Tibial artery (tissue), 4 donors: ENCODE measurements at regions of chr17 and their contacts with region 1.

Region 1: DNA sequence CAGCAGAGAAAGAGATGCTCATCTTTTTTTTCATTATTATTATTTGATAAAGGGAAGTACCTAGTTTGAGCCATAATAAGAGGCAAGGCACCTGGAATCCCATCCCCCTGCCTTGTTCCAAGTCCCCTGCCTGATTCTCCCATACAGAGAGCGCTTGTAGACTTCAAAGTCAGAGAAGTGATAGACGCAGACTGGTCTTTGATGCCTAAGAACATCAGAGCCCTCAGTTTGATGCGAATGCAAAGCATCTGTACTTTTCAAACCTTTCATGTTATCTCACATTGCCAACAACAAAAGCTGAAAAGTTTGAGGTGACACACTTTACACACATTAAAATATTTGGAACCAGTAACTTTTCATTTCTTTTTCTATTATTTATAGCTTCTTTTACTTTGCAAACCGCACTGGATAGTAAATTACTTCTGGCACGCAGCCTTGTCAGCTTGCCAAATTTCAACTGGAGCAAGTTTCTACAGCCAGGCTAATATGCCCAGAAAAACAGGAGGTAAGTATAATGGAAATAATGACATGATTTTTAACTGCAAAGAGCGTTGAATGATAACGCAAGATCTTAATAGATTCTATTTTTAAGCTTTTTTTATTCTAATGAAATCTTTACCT is 5.9 kb upstream of the UTP6 start:
- DNase-seq: peak; percentile 45 to 70
- H3K4me3 ChIP-seq: no peak overlapping the region
- H3K27ac ChIP-seq: no peak overlapping the region
- H3K4me1 ChIP-seq: peaks cover 0 to 16% (median 10%) of the 10 kb centered on the region in 4 donors
- H3K27me3 ChIP-seq: no peaks in the 10 kb centered on the region
- CTCF ChIP-seq: no peak

Region 2: DNA sequence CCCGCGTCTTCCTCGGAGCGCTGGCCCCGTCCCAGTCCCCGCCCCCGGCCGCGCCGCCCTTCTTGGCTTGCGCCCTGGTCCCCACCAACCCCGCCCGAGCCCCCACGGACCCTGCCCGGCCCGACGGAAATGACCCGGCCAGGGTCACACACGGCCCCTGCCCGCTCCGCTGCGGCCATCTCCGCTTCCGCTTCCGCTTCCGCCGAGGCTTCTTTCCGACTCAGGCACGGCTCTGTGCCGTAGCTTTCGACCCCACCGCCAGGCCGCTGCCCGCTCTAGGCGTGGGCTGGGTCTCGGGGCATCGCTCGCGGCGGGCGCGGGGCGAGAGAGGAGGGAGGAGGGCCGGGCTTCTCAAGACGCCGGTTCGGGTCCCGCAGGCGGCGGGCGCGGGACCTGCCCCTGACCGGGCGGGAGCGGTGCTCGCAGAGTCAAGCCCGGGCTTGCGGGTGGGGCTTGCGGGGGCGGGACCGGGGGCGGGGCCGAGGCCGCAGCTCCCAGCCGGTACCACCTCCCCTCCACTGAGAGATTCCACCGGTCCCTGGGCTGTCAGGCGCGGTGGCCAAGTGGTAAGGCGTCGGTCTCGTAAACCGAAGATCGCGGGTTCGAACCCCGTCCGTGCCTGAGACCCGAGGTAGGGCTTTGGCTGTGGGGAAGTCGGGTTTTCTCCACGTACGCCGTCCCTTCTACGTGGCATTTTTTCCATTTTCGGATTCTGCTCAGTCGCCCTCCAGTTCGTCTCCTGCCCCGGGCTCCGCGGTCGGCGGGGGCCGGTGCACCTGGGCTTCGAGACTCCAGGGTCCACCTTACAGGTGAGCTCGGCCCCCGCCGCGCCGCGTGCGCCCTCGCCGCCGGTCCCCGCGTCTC is 357.7 kb before region 1 on chr17:
- intact Hi-C with region 1: loop called (anchors 10 kb)
- DNase-seq: peak; percentile 92 to 95
- H3K4me3 ChIP-seq: peak overlapping the region; percentile 95 to 100
- H3K27ac ChIP-seq: peak overlapping the region; percentile 94 to 97
- H3K4me1 ChIP-seq: peaks cover 0 to 13% (median 2%) of the 10 kb centered on the region in 4 donors
- H3K27me3 ChIP-seq: no peaks in the 10 kb centered on the region
- CTCF ChIP-seq: peak in 1 of 2 experiments; percentile 16

Region 3: GRCh38 chr17:31820691-31821435 is 86.6 kb before region 1 on chr17:
- intact Hi-C with region 1: no loop called
- DNase-seq: no peak
- H3K4me3 ChIP-seq: no peak overlapping the region
- H3K27ac ChIP-seq: no peak overlapping the region
- H3K4me1 ChIP-seq: peaks cover 0 to under 1% (median 0%) of the 10 kb centered on the region in 4 donors
- H3K27me3 ChIP-seq: no peaks in the 10 kb centered on the region
- CTCF ChIP-seq: no peak

Region 4: DNA sequence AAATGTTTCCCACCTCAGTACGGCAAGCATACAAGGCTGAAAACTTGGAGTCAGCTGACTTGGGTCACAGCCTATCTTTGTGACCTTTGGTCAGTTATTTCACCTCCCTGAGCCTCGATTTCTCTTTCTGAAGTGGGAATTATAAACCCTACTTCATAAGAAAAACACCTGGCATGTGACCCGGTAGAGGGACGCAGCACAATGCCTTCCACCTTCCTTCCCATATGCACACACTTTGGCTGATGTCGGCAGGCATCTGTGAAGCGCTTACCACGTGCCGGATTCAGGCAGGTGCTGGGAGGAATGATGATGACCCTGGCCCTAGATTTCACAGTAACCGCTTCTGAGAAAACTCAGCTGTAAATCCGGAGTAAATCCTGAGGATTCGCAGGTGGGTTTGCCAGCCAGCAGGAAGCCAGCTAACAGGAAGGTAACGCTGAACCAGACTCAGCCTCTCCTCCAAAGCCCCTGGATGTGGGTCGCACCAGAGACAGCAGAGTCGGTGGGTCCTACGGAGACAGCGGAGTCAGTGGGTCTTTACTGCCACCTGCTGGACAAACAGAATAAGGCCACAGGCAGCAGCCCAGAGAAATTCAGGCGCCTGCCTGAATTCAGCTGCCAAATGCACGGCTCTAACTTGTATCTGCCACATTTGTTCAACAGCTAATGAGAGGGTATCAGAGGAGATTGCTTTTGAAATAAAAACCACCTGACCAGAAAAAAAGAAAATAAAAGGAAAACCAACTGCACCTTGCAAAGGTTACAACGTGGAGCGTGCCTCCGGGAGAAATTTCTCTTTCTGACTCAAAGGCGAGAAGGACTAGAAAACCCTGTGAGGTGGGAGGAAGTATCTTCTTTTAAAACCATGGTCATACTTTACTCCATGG is 65.0 kb before region 1 on chr17:
- intact Hi-C with region 1: no loop called
- DNase-seq: peak; percentile 57 to 83
- H3K4me3 ChIP-seq: peak overlapping the region; percentile 23 to 40
- H3K27ac ChIP-seq: peak overlapping the region; percentile 76 to 80
- H3K4me1 ChIP-seq: peaks cover 0 to 64% (median 28%) of the 10 kb centered on the region in 4 donors
- H3K27me3 ChIP-seq: no peaks in the 10 kb centered on the region
- CTCF ChIP-seq: peak; percentile 98 to 99